Esophagus squamous epithelium (tissue), 5 donors: ENCODE measurements at regions of chr7 and their contacts with region 1.

Region 1: GRCh38 chr7:77657427-77658224 is 38.6 kb upstream of the RSBN1L start:
- DNase-seq: no peak
- H3K4me3 ChIP-seq: no peak overlapping the region
- H3K27ac ChIP-seq: no peak overlapping the region
- H3K4me1 ChIP-seq: no peaks in the 10 kb centered on the region
- H3K27me3 ChIP-seq: no peaks in the 10 kb centered on the region
- CTCF ChIP-seq: peak in 5 of 6 experiments; percentile 44 to 70 (median 60)
- POLR2A ChIP-seq: no peak

Region 2: GRCh38 chr7:77331938-77332695 is 325.5 kb before region 1 on chr7:
- intact Hi-C with region 1: no loop called
- DNase-seq: no peak
- H3K4me3 ChIP-seq: no peak overlapping the region
- H3K27ac ChIP-seq: no peak overlapping the region
- H3K4me1 ChIP-seq: peaks cover 5 to 59% (median 19%) of the 10 kb centered on the region in 3 donors
- H3K27me3 ChIP-seq: no peaks in the 10 kb centered on the region
- CTCF ChIP-seq: peak; percentile 56 to 82 (median 72)
- POLR2A ChIP-seq: no peak

Region 3: GRCh38 chr7:77866786-77867536 is 209.3 kb after region 1 on chr7:
- intact Hi-C with region 1: no loop called
- DNase-seq: no peak
- H3K4me3 ChIP-seq: no peak overlapping the region
- H3K27ac ChIP-seq: no peak overlapping the region
- H3K4me1 ChIP-seq: peaks cover 0 to 14% (median 7%) of the 10 kb centered on the region in 3 donors
- H3K27me3 ChIP-seq: no peaks in the 10 kb centered on the region
- CTCF ChIP-seq: no peak
- POLR2A ChIP-seq: no peak

Region 4: GRCh38 chr7:77935652-77936348 is 278.2 kb after region 1 on chr7:
- intact Hi-C with region 1: loop called (anchors 10 kb)
- DNase-seq: no peak
- H3K4me3 ChIP-seq: no peak overlapping the region
- H3K27ac ChIP-seq: no peak overlapping the region
- H3K4me1 ChIP-seq: peaks cover 0 to 10% (median 0%) of the 10 kb centered on the region in 3 donors
- H3K27me3 ChIP-seq: no peaks in the 10 kb centered on the region
- CTCF ChIP-seq: peak in 3 of 6 experiments; percentile 21 to 36 (median 28)
- POLR2A ChIP-seq: no peak